Activated naive CD4-positive, alpha-beta T cell treated with anti-CD3 and anti-CD28 coated beads, Interleukin-2, amount 10 ng/mL, durations not matched to agents 7 days and 5 days (primary cell): ENCODE measurements at regions of chr11 and their contacts with region 1.

Region 1: GRCh38 chr11:118338637-118339061 is 3.9 kb downstream of the CD3D start:
- DNase-seq: peak; percentile 95
- H3K4me3 Mint-ChIP-seq: peak overlapping the region; percentile 81
- H3K27ac Mint-ChIP-seq: peak overlapping the region; percentile 100
- H3K4me1 Mint-ChIP-seq: peaks cover 72% of the 10 kb centered on the region
- H3K27me3 Mint-ChIP-seq: peaks cover 4% of the 10 kb centered on the region

Region 2: DNA sequence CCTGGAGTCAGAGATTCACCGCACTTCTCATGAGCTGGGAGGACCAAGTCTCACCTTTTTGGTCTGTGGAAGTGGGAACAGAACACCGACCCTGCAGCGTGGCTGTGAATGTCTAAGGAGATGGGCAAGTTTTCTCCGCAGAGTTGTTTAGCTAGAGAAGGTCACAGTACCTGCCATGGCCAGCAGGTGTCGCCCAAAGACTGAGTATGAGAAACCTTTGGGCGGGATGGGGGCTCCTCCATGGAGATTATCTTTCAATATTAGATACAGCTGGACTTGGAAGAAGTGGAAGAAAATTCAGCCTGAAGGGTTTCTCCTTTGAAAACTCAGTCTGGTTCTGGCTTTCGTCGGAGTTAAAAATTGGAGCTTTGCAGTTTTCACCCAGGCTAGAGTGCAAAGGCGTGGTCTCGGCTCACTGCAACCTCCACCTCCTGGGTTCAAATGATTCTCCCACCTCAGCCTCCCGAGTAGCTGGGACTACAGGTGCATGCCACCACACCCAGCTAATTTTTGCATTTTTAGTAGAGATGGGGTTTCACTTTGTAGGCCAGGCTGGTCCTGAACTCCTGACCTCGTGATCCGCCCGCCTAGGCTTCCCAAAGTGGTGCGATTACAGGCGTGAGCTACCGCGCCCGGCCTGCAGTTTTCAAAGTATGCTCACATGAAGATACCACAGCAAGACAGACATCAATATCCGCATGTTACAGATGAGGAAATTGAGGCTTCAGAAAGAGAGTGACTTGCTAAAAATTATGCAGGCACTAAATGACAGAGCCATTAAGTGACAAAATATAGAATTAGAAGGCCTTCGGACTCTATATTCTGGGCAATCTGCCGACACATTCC is 530.9 kb before region 1 on chr11:
- CTCF ChIA-PET with region 1: no interaction called
- DNase-seq: peak; percentile 83
- H3K4me3 Mint-ChIP-seq: no peak overlapping the region
- H3K27ac Mint-ChIP-seq: no peak overlapping the region
- H3K4me1 Mint-ChIP-seq: peaks cover 9% of the 10 kb centered on the region
- H3K27me3 Mint-ChIP-seq: peaks cover 53% of the 10 kb centered on the region

Region 3: DNA sequence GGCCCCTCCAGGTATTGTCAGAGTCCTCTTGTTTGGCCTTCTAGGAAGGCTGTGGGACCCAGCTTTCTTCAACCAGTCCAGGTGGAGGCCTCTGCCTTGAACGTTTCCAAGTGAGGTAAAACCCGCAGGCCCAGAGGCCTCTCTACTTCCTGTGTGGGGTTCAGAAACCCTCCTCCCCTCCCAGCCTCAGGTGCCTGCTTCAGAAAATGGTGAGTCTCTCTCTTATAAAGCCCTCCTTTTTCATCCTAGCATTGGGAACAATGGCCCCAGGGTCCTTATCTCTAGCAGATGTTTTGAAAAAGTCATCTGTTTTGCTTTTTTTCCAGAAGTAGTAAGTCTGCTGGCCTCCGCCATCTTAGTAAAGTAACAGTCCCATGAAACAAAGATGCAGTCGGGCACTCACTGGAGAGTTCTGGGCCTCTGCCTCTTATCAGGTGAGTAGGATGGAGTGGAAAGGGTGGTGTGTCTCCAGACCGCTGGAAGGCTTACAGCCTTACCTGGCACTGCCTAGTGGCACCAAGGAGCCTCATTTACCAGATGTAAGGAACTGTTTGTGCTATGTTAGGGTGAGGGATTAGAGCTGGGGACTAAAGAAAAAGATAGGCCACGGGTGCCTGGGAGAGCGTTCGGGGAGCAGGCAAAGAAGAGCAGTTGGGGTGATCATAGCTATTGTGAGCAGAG is 33.9 kb before region 1 on chr11 and contains the start of gene CD3E:
- CTCF ChIA-PET with region 1: interaction called, 76 read pairs
- DNase-seq: peak; percentile 83
- H3K4me3 Mint-ChIP-seq: peak within 1 kb of the TSS; percentile 98
- H3K27ac Mint-ChIP-seq: peak within 1 kb of the TSS; percentile 99
- H3K4me1 Mint-ChIP-seq: peaks cover 65% of the 10 kb centered on the region
- H3K27me3 Mint-ChIP-seq: peaks cover 4% of the 10 kb centered on the region

Region 4: DNA sequence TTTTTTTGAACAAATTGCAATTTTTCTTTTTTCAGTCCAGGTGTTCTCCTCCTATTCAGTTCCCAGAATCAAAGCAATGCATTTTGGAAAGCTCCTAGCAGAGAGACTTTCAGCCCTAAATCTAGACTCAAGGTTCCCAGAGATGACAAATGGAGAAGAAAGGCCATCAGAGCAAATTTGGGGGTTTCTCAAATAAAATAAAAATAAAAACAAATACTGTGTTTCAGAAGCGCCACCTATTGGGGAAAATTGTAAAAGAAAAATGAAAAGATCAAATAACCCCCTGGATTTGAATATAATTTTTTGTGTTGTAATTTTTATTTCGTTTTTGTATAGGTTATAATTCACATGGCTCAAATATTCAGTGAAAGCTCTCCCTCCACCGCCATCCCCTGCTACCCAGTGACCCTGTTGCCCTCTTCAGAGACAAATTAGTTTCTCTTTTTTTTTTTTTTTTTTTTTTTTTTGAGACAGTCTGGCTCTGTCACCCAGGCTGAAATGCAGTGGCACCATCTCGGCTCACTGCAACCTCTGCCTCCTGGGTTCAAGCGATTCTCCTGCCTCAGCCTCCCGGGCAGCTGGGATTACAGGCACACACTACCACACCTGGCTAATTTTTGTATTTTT is 14.5 kb after region 1 on chr11:
- CTCF ChIA-PET with region 1: interaction called, 14 read pairs
- DNase-seq: no peak
- H3K4me3 Mint-ChIP-seq: no peak overlapping the region
- H3K27ac Mint-ChIP-seq: peak overlapping the region; percentile 80
- H3K4me1 Mint-ChIP-seq: peaks cover 31% of the 10 kb centered on the region
- H3K27me3 Mint-ChIP-seq: no peaks in the 10 kb centered on the region

Region 5: DNA sequence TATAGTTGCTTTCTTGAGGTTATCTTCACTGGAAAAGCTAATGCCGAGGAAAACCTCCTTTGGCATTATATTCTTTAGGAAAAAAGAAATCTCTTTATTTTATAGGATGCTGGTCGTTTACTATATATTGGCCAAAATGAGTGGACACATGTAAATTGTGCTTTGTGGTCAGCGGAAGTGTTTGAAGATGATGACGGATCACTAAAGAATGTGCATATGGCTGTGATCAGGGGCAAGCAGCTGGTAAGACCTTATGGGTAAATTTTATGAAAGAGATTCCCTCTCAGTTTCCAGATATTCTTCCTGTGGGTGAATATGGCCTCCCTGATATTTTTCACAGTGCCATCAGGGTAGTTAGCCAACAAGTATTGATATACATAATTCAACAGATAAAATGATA is 159.2 kb after region 1 on chr11:
- CTCF ChIA-PET with region 1: no interaction called
- DNase-seq: no peak
- H3K4me3 Mint-ChIP-seq: no peak overlapping the region
- H3K27ac Mint-ChIP-seq: no peak overlapping the region
- H3K4me1 Mint-ChIP-seq: no peaks in the 10 kb centered on the region
- H3K27me3 Mint-ChIP-seq: no peaks in the 10 kb centered on the region